CD4-positive, alpha-beta memory T cell (primary cell): ENCODE measurements at regions of chr4 and their contacts with region 1.

Region 1: GRCh38 chr4:40309250-40309774 is 25.8 kb upstream of the CHRNA9 start:
- DNase-seq: peak; percentile 84 to 93 (median 86)
- H3K4me3 ChIP-seq: peak overlapping the region in 1 of 2 donors; percentile 43
- H3K4me3 Mint-ChIP-seq: peak overlapping the region; percentile 74 to 92 (median 85)
- H3K27ac ChIP-seq: peak overlapping the region; percentile 74
- H3K27ac Mint-ChIP-seq: peak overlapping the region; percentile 93 to 99 (median 98)
- H3K4me1 ChIP-seq: peaks cover 79% of the 10 kb centered on the region
- H3K4me1 Mint-ChIP-seq: peaks cover 57 to 82% (median 67%) of the 10 kb centered on the region in 4 donors
- H3K27me3 ChIP-seq: no peaks in the 10 kb centered on the region
- H3K27me3 Mint-ChIP-seq: no peaks in the 10 kb centered on the region

Region 2: GRCh38 chr4:39697740-39698423 is 611.4 kb before region 1 on chr4 and contains the start of gene UBE2K:
- CTCF ChIA-PET with region 1: no interaction called
- POLR2A ChIA-PET with region 1: no interaction called
- intact Hi-C with region 1: loop called (anchors 5 kb)
- DNase-seq: peak; percentile 86 to 93 (median 91)
- H3K4me3 ChIP-seq: peak within 1 kb of the TSS; percentile 79 to 93
- H3K4me3 Mint-ChIP-seq: peak within 1 kb of the TSS; percentile 96 to 100 (median 98)
- H3K27ac ChIP-seq: peak within 1 kb of the TSS; percentile 88
- H3K27ac Mint-ChIP-seq: peak within 1 kb of the TSS; percentile 94 to 100 (median 99)
- H3K4me1 ChIP-seq: peaks cover 50% of the 10 kb centered on the region
- H3K4me1 Mint-ChIP-seq: peaks cover 27 to 54% (median 37%) of the 10 kb centered on the region in 4 donors
- H3K27me3 ChIP-seq: no peaks in the 10 kb centered on the region
- H3K27me3 Mint-ChIP-seq: no peaks in the 10 kb centered on the region
- total RNA-seq, gene UBE2K: 45.0 to 51.2 TPM

Region 3: GRCh38 chr4:40149960-40150385 is 159.3 kb before region 1 on chr4:
- CTCF ChIA-PET with region 1: interaction called, 87 read pairs
- POLR2A ChIA-PET with region 1: interaction called, 45 read pairs
- intact Hi-C with region 1: loop called (anchors 1 kb)
- DNase-seq: peak; percentile 75 to 81 (median 77)
- H3K4me3 ChIP-seq: no peak overlapping the region
- H3K4me3 Mint-ChIP-seq: peak overlapping the region in 2 of 8 donors; percentile 44 to 65
- H3K27ac ChIP-seq: no peak overlapping the region
- H3K27ac Mint-ChIP-seq: peak overlapping the region; percentile 27 to 91 (median 77)
- H3K4me1 ChIP-seq: peaks cover 22% of the 10 kb centered on the region
- H3K4me1 Mint-ChIP-seq: peaks cover 20 to 34% (median 25%) of the 10 kb centered on the region in 4 donors
- H3K27me3 ChIP-seq: no peaks in the 10 kb centered on the region
- H3K27me3 Mint-ChIP-seq: no peaks in the 10 kb centered on the region

Region 4: GRCh38 chr4:40199999-40200874 is 109.1 kb before region 1 on chr4:
- CTCF ChIA-PET with region 1: interaction called, 115 read pairs
- POLR2A ChIA-PET with region 1: interaction called, 179 read pairs
- intact Hi-C with region 1: loop called (anchors 1 kb)
- DNase-seq: peak; percentile 62 to 87 (median 66)
- H3K4me3 ChIP-seq: peak overlapping the region; percentile 84 to 98
- H3K4me3 Mint-ChIP-seq: peak overlapping the region; percentile 95 to 100 (median 98)
- H3K27ac ChIP-seq: peak overlapping the region; percentile 99
- H3K27ac Mint-ChIP-seq: peak overlapping the region; percentile 98 to 100 (median 100)
- H3K4me1 ChIP-seq: peaks cover 44% of the 10 kb centered on the region
- H3K4me1 Mint-ChIP-seq: peaks cover 30 to 82% (median 38%) of the 10 kb centered on the region in 4 donors
- H3K27me3 ChIP-seq: no peaks in the 10 kb centered on the region
- H3K27me3 Mint-ChIP-seq: no peaks in the 10 kb centered on the region

Region 5: GRCh38 chr4:40238700-40239548 is 70.4 kb before region 1 on chr4:
- CTCF ChIA-PET with region 1: interaction called, 200 read pairs
- POLR2A ChIA-PET with region 1: interaction called, 39 read pairs
- intact Hi-C with region 1: loop called (anchors 2 kb)
- DNase-seq: peak; percentile 85 to 97 (median 87)
- H3K4me3 ChIP-seq: peak overlapping the region; percentile 48 to 53
- H3K4me3 Mint-ChIP-seq: peak overlapping the region; percentile 73 to 87 (median 80)
- H3K27ac ChIP-seq: peak overlapping the region; percentile 89
- H3K27ac Mint-ChIP-seq: peak overlapping the region; percentile 95 to 100 (median 97)
- H3K4me1 ChIP-seq: peaks cover 98% of the 10 kb centered on the region
- H3K4me1 Mint-ChIP-seq: peaks cover 73 to 96% (median 86%) of the 10 kb centered on the region in 4 donors
- H3K27me3 ChIP-seq: no peaks in the 10 kb centered on the region
- H3K27me3 Mint-ChIP-seq: no peaks in the 10 kb centered on the region

Region 6: DNA sequence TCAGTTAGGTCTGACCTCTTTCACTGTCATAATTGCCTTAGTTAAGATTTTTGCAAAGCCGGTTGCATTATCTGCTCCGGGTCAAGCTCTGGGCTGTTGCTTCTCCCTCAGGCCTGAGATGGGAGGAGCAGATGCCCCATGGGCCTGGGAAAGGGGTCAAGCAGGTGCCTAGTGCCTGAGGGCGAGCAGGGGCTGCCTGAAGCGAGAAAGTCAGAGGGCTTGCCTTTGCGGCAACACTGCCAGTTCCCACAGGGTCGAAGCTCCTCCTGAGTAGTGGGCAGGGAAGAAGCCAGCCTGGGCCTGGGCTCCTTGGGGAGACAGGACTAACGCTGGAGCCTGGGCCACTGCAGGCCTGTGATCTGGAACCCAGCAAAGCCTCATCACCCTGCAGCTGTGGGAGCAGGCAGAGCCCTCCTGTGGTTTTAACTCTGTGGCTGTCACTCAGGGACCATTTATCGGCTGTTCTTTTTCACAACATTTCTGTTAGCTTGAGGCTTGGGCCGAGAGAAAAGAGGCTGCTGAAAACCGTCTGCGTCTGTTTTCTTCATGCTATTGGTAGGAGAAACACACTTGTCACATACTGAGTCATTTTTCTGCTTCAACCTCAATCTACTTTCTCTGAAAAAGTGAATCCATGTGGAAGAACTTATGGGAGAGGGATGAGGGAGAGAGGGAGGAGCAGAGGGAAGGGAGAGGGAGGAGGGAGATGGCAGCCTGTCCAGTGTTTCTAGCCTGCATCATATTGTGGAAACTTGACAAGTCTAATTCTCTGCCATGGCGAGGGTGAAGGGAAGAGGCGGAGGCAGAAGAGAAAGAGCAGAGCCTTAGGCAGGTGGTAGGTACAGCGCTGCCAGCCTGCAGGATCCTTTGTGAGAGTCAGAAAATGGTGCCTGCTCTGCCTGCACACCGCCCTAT is 44.1 kb before region 1 on chr4:
- CTCF ChIA-PET with region 1: interaction called, 3 read pairs
- POLR2A ChIA-PET with region 1: interaction called, 3 read pairs
- intact Hi-C with region 1: loop called (anchors 5 kb)
- DNase-seq: peak in 3 of 5 donors; percentile 51 to 63 (median 53)
- H3K4me3 ChIP-seq: no peak overlapping the region
- H3K4me3 Mint-ChIP-seq: peak overlapping the region; percentile 42 to 78 (median 70)
- H3K27ac ChIP-seq: peak overlapping the region; percentile 19
- H3K27ac Mint-ChIP-seq: peak overlapping the region; percentile 66 to 93 (median 85)
- H3K4me1 ChIP-seq: peaks cover 26% of the 10 kb centered on the region
- H3K4me1 Mint-ChIP-seq: peaks cover 26 to 54% (median 39%) of the 10 kb centered on the region in 4 donors
- H3K27me3 ChIP-seq: no peaks in the 10 kb centered on the region
- H3K27me3 Mint-ChIP-seq: no peaks in the 10 kb centered on the region

Region 7: GRCh38 chr4:40289366-40290188 is 19.7 kb before region 1 on chr4:
- CTCF ChIA-PET with region 1: interaction called, 271 read pairs
- POLR2A ChIA-PET with region 1: interaction called, 87 read pairs
- intact Hi-C with region 1: loop called (anchors 1 kb)
- DNase-seq: peak; percentile 36 to 69 (median 43)
- H3K4me3 ChIP-seq: no peak overlapping the region
- H3K4me3 Mint-ChIP-seq: peak overlapping the region; percentile 7 to 81 (median 76)
- H3K27ac ChIP-seq: peak overlapping the region; percentile 27
- H3K27ac Mint-ChIP-seq: peak overlapping the region; percentile 65 to 96 (median 88)
- H3K4me1 ChIP-seq: peaks cover 47% of the 10 kb centered on the region
- H3K4me1 Mint-ChIP-seq: peaks cover 41 to 79% (median 55%) of the 10 kb centered on the region in 4 donors
- H3K27me3 ChIP-seq: no peaks in the 10 kb centered on the region
- H3K27me3 Mint-ChIP-seq: no peaks in the 10 kb centered on the region